PC-9 (cell line): ENCODE measurements at regions of chr15 and their contacts with region 1.

Region 1: DNA sequence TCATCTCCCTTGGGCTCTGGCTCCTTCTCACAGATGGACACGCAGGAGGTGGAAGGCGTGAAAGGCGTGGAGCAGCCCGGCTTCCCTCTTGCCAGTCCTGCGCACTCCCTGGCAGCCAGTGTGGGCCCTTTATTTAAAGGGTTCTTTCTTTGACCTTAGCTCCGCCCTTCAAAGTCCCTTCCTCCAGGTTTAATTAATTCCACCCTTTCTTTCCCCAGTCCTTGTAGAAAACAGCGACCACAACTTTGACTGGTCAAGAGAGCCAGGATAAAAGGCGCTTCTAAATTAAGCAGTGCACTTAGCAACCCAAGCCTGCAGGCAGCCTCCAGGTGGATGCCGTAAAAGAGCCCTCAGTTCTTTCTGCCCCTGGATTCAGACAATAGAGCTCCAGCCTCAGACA is at the start of gene HDC:
- DNase-seq: no peak
- H3K4me3 ChIP-seq: no peak within 1 kb of the TSS
- H3K27ac ChIP-seq: no peak within 1 kb of the TSS
- H3K4me1 ChIP-seq: no peaks in the 10 kb centered on the region
- H3K27me3 ChIP-seq: no peaks in the 10 kb centered on the region
- CTCF ChIP-seq: no peak
- total RNA-seq, gene HDC: not detected in 2 replicates

Region 2: GRCh38 chr15:50176869-50177268 is 88.8 kb before region 1 on chr15:
- CTCF ChIA-PET with region 1: interaction called, 13 read pairs
- POLR2A ChIA-PET with region 1: no interaction called
- intact Hi-C with region 1: no loop called
- DNase-seq: no peak
- H3K4me3 ChIP-seq: no peak overlapping the region
- H3K27ac ChIP-seq: no peak overlapping the region
- H3K4me1 ChIP-seq: no peaks in the 10 kb centered on the region
- H3K27me3 ChIP-seq: no peaks in the 10 kb centered on the region
- CTCF ChIP-seq: no peak